ENCODE measurements at regions of chr2 and their contacts with region 1.

Region 1: GRCh38 chr2:191797960-191798876 is 48.7 kb downstream of the CAVIN2 start:
- DNase-seq: no peak
- ATAC-seq: no peak
- H3K4me3 Mint-ChIP-seq: no peak overlapping the region
- H3K27ac Mint-ChIP-seq: no peak overlapping the region
- H3K4me1 Mint-ChIP-seq: no peaks in the 10 kb centered on the region
- H3K27me3 Mint-ChIP-seq: peaks cover 4% of the 10 kb centered on the region

Region 2: GRCh38 chr2:191352536-191352935 is 445.7 kb before region 1 on chr2:
- CTCF ChIA-PET with region 1: no interaction called
- POLR2A ChIA-PET with region 1: no interaction called
- intact Hi-C with region 1: no loop called
- DNase-seq: no peak
- ATAC-seq: no peak
- H3K4me3 Mint-ChIP-seq: no peak overlapping the region
- H3K27ac Mint-ChIP-seq: no peak overlapping the region
- H3K4me1 Mint-ChIP-seq: no peaks in the 10 kb centered on the region
- H3K27me3 Mint-ChIP-seq: no peaks in the 10 kb centered on the region

Region 3: DNA sequence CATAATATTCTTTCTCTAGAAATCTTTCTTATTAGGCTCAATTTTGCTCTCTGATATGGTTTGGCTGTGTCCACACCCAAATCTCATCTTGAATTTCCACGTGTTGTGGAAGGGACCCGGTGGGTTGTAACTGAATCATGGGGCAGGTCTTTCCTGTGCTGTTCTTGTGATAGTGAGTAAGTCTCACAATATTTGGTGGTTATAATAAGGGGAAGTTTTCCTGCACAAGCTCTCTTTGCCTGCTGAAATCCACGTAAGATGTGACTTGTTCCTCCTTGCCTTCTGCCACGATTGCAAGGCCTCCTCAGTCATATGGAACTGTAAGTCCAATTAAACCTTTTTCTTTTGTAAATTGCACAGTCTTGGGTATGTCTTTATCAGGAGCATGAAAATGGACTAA is 25.1 kb before region 1 on chr2:
- CTCF ChIA-PET with region 1: no interaction called
- POLR2A ChIA-PET with region 1: no interaction called
- intact Hi-C with region 1: no loop called
- DNase-seq: no peak
- ATAC-seq: no peak
- H3K4me3 Mint-ChIP-seq: no peak overlapping the region
- H3K27ac Mint-ChIP-seq: no peak overlapping the region
- H3K4me1 Mint-ChIP-seq: no peaks in the 10 kb centered on the region
- H3K27me3 Mint-ChIP-seq: peaks cover 4% of the 10 kb centered on the region

Region 4: DNA sequence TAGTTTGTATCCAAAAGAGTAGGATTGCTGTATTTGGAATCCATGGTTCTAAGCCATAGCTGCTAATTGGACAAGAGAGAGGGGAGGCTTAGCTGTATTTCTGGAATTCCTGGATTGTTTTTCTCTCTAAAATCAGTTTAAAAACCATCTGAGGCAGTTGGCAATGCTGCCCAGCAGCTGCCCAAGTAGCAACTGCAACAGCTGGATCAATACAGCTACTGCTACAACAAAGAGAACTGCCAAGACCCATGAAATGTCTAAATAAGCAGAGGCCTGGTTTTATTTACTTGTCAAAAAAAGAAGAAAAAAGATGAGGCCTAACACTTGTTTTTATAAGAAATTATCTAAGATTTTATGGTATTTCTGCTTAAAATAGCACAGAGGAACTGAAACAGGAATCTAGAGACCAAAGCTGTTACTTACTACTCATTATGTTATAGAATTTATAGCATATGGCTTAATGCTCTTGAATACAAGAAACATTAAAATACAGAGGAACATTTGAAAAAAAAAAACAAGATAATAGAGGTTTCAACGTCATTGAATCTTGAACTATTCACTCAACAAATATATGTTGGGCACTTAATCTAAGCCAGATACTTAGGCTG is 357.4 kb after region 1 on chr2:
- CTCF ChIA-PET with region 1: interaction called, 10 read pairs
- POLR2A ChIA-PET with region 1: no interaction called
- intact Hi-C with region 1: no loop called
- DNase-seq: no peak
- ATAC-seq: no peak
- H3K4me3 Mint-ChIP-seq: no peak overlapping the region
- H3K27ac Mint-ChIP-seq: no peak overlapping the region
- H3K4me1 Mint-ChIP-seq: no peaks in the 10 kb centered on the region
- H3K27me3 Mint-ChIP-seq: peaks cover 5% of the 10 kb centered on the region

Region 5: GRCh38 chr2:192194866-192195547 is 396.8 kb after region 1 on chr2 and contains the start of gene TMEFF2:
- CTCF ChIA-PET with region 1: no interaction called
- POLR2A ChIA-PET with region 1: no interaction called
- intact Hi-C with region 1: no loop called
- DNase-seq: peak; percentile 82
- ATAC-seq: peak; percentile 87
- H3K4me3 Mint-ChIP-seq: peak within 1 kb of the TSS; percentile 68
- H3K27ac Mint-ChIP-seq: no peak within 1 kb of the TSS
- H3K4me1 Mint-ChIP-seq: peaks cover 25% of the 10 kb centered on the region
- H3K27me3 Mint-ChIP-seq: peaks cover 52% of the 10 kb centered on the region
- total RNA-seq, gene TMEFF2: not detected

Measured in activated CD4-positive, alpha-beta T cell treated with anti-CD3 and anti-CD28 coated beads for 36 hours (primary cell).